ENCODE measurements at regions of chr13 and their contacts with region 1.

Region 1: GRCh38 chr13:96011291-96011872 is 41.8 kb downstream of the UGGT2 start:
- DNase-seq: no peak
- ATAC-seq: no peak
- H3K4me3 ChIP-seq: no peak overlapping the region
- H3K27ac ChIP-seq: no peak overlapping the region
- H3K4me1 ChIP-seq: peaks cover 0 to 2% of the 10 kb centered on the region in 2 donors
- H3K27me3 ChIP-seq: no peaks in the 10 kb centered on the region

Region 2: DNA sequence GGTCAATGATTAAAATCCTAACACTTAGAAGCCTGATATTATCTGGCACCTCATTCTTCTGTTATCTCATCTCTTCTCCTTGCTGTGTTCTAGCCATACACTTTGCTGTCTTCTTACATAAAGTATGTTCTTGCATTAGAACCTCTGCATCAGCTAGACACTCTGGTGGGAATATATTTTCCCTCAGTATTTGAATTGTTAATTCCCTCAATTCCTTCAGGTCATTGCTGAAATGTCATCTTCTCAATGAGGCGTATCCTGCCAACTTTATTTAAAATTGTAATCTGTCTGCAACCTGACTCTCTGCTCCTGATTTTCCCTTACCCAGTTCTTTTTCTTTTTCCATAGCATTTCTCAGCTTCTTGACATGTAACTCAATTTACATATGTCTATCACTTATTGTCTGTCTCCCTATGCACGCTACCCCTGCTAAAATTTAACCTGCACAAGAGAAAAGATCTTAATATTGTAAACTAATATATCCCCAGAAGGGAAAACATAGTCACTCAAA is 96.3 kb before region 1 on chr13:
- intact Hi-C with region 1: no loop called
- DNase-seq: no peak
- ATAC-seq: no peak
- H3K4me3 ChIP-seq: no peak overlapping the region
- H3K27ac ChIP-seq: no peak overlapping the region
- H3K4me1 ChIP-seq: no peaks in the 10 kb centered on the region
- H3K27me3 ChIP-seq: no peaks in the 10 kb centered on the region

Region 3: DNA sequence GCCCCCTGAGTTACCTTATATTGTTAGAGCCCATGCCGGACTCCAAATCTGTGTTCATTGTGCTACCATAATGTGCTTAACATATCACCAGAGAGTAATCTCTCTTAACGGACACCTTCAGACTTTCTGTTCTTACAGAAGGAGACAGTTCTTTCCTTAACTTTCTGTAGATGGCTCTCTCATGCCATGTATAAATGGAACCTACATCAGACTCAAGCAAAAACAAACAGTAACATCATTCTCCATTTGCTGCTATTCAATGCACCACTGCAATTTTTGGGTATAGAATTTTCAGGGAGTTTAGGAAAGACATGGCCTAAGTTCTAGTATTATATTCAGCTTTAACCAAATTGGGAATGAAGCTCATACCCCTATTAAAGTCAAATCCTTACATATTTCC is 54.5 kb after region 1 on chr13:
- intact Hi-C with region 1: loop called in 1 of 2 experiments (anchors 10 kb)
- DNase-seq: no peak
- ATAC-seq: no peak
- H3K4me3 ChIP-seq: no peak overlapping the region
- H3K27ac ChIP-seq: no peak overlapping the region
- H3K4me1 ChIP-seq: no peaks in the 10 kb centered on the region
- H3K27me3 ChIP-seq: peaks cover 0 to 1% of the 10 kb centered on the region in 2 donors